ENCODE measurements at regions of chr3 and their contacts with region 1.

Region 1: GRCh38 chr3:31768479-31769123 is 212.5 kb downstream of the OSBPL10 start:
- DNase-seq: no peak
- ATAC-seq: no peak
- H3K4me3 ChIP-seq: no peak overlapping the region
- H3K27ac ChIP-seq: no peak overlapping the region
- H3K4me1 ChIP-seq: no peaks in the 10 kb centered on the region
- H3K27me3 ChIP-seq: no peaks in the 10 kb centered on the region

Region 2: GRCh38 chr3:30768703-30769685 is 999.6 kb before region 1 on chr3:
- intact Hi-C with region 1: loop called in 1 of 2 experiments (anchors 5 kb)
- DNase-seq: peak; percentile 81 to 93
- ATAC-seq: peak; percentile 57
- H3K4me3 ChIP-seq: no peak overlapping the region
- H3K27ac ChIP-seq: no peak overlapping the region
- H3K4me1 ChIP-seq: no peaks in the 10 kb centered on the region
- H3K27me3 ChIP-seq: no peaks in the 10 kb centered on the region

Region 3: DNA sequence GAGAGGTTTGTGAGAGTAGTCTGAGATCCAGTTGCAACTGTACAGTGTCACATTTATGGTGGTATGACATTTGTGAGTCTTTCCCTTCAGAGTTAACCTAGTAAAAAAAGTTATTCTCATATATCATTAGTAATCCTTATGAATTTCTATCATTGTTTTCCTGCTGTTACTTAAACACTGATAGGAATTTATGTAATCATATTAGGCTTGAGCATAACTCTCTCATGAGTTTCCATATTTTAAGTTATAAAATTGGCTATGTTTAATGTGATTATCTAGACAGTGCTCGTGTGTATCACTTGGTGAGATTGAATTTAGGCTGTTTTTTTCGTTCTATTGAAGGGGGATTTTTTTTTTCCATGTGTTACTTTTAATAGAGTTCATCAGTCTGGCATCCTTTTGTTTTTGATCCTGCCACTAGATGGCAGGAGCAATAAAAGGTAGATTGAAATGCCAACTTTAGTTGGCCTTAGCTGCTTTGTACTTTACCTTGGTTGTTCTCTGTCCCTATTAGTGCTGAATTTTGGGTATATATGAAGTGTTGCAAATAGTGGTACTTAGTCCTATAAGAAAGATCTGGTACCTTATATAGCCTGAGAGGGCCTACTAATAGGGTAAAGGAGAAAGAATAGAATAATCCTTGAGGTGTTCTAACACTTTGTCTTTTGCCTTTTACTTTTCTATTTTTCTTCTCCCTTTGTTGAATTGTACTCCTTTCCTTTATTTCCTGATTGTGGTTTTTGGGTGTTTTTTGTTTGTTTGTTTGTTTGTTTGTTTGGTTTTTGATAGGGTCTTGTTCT is 217.9 kb before region 1 on chr3:
- intact Hi-C with region 1: loop called in 1 of 2 experiments (anchors 5 kb)
- DNase-seq: no peak
- ATAC-seq: no peak
- H3K4me3 ChIP-seq: no peak overlapping the region
- H3K27ac ChIP-seq: no peak overlapping the region
- H3K4me1 ChIP-seq: peaks cover 1 to 6% of the 10 kb centered on the region in 2 donors
- H3K27me3 ChIP-seq: no peaks in the 10 kb centered on the region

Region 4: GRCh38 chr3:31610700-31611275 is 157.8 kb before region 1 on chr3:
- intact Hi-C with region 1: loop called in 1 of 2 experiments (anchors 5 kb)
- DNase-seq: no peak
- ATAC-seq: no peak
- H3K4me3 ChIP-seq: no peak overlapping the region
- H3K27ac ChIP-seq: no peak overlapping the region
- H3K4me1 ChIP-seq: no peaks in the 10 kb centered on the region
- H3K27me3 ChIP-seq: no peaks in the 10 kb centered on the region